Keratinocyte (primary cell): ENCODE measurements at regions of chr3 and their contacts with region 1.

Region 1: GRCh38 chr3:107674371-107674770 is 151.6 kb downstream of the BBX start:
- DNase-seq: no peak
- H3K4me3 ChIP-seq: no peak overlapping the region
- H3K27ac ChIP-seq: no peak overlapping the region
- H3K4me1 ChIP-seq: peaks cover 7% of the 10 kb centered on the region
- H3K27me3 ChIP-seq: no peaks in the 10 kb centered on the region
- CTCF ChIP-seq: peak in 1 of 3 experiments; percentile 11

Region 2: DNA sequence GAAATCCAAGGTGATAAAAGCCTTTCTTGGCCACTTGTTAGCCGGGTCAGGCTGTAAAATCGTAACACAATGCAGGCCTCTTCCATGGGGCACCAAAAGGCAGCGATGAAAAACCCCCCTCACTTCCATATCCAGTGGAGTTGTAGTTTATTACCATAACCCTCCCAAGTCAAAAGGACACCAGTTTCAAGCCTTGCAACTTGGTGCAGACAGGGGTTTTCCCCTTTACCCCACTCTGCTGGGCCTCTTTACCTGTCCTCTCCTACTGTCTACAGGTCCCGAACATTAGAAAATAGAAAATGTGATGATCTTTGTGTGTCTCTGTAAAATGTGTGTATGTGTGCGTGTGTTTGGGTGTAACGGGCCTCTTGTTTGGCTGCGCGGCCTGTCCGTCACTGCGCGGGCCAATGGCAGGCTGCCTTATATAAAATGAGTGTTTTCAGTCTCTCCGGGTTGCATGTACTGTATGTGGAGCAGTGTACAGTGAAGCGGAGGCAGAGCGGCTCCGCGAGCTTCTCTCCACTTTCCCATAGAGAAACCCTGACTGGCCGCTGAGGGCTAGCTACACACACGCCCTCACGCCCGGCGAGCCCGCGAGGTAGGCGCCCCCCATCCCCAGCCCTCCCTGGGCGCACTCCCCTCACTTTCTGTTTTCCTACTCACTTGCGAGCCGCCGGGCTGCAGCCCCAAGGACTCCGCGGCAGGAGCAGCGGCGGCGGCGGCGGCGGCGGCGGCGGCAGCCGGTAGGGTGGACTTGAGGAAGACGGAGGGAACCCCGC is 151.7 kb before region 1 on chr3 and contains the start of gene BBX:
- dilution Hi-C with region 1: no loop called
- DNase-seq: peak; percentile 60
- H3K4me3 ChIP-seq: peak within 1 kb of the TSS; percentile 72 to 96 (median 93)
- H3K27ac ChIP-seq: peak within 1 kb of the TSS; percentile 83
- H3K4me1 ChIP-seq: peaks cover 12% of the 10 kb centered on the region
- H3K27me3 ChIP-seq: no peaks in the 10 kb centered on the region
- CTCF ChIP-seq: no peak
- polyA plus RNA-seq, gene BBX: 30.9 to 43.4 TPM (median 33.3 TPM) in 3 replicates

Region 3: GRCh38 chr3:107740992-107741896 is 66.9 kb after region 1 on chr3:
- dilution Hi-C with region 1: loop called (anchors 5 kb)
- DNase-seq: no peak
- H3K4me3 ChIP-seq: no peak overlapping the region
- H3K27ac ChIP-seq: no peak overlapping the region
- H3K4me1 ChIP-seq: no peaks in the 10 kb centered on the region
- H3K27me3 ChIP-seq: no peaks in the 10 kb centered on the region
- CTCF ChIP-seq: peak in 2 of 3 experiments; percentile 34 to 35